ENCODE measurements at regions of chr1 and their contacts with region 1.

Region 1: DNA sequence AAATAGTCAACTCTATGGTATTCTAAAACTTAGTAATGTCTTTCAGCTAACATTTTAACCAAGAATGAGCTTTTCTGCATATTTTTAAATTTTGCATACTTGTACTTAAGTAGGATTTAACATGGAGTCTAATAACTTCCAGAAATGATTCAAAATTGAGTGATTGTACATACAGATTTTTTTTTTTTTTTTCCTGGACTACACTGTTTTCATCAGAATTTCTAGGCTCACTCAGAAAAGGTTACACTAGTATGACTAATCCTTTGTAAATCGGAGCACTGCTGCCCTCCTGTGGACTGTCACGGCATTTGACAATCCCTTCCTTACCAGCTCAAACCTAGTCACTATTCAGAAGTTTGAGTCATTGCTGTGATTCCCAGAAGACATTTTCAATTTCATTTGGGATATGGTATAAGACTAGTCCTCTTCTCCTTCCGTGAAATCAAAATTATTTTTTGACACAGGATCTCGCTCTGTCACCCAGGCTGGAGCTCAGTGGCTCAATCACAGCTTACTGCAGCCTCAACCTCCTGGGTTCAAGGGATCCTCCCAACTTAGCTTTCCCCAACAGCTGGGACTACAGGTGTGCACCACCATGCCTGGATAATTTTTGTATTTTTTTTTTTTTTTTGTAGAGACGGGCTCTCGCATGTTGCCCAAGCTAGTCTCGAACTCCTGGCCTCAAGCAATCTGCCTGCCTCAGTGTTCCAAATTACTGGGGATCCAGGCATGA is 45.5 kb downstream of the CD46 start:
- DNase-seq: peak; percentile 72 to 91 (median 85)
- H3K4me3 ChIP-seq: no peak overlapping the region
- H3K27ac ChIP-seq: no peak overlapping the region
- H3K4me1 ChIP-seq: no peaks in the 10 kb centered on the region
- H3K27me3 ChIP-seq: no peaks in the 10 kb centered on the region
- CTCF ChIP-seq: peak; percentile 56 to 69 (median 64)
- EP300 ChIP-seq: no peak
- POLR2A ChIP-seq: no peak

Region 2: DNA sequence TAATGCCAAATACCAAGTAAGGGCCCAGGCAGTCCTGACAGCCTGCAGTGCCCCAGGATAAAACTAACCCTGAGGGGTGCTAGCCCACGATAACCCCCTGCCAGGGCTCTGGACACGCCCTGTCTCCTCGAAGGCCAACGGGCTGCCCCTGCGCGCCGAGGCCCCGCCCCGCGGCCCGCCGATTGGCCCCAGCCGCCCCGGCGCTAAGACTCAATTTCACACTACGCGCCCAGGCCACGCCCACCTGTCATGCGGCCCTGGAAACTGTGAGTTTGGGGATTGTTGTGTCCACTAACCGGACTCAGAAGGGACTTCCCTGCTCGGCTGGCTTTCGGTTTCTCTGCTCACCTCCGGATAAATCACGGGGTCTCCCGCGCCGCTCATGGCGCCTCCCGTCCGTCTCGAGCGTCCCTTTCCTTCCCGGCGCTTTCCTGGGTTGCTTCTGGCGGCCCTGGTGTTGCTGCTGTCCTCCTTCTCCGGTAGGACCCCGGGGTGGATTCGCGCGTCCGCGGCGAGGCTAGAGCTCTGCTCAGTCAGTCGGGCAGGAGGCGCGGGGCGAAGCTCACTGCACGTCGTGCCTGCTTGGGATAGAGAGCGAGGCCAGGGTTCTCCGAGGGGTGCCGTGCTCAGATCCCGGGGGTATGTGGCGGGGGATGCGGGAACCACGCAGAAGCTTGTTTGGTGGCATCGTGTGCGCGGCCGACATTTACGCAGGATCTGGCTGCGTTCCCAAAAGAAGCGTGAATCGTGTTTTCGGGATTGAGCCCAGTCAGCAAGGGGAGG is 152.4 kb before region 1 on chr1 and contains the start of gene CR1L:
- intact Hi-C with region 1: loop called in 1 of 4 experiments (anchors 10 kb)
- DNase-seq: peak; percentile 50 to 81 (median 69)
- H3K4me3 ChIP-seq: peak within 1 kb of the TSS; percentile 35
- H3K27ac ChIP-seq: no peak within 1 kb of the TSS
- H3K4me1 ChIP-seq: peaks cover 3% of the 10 kb centered on the region
- H3K27me3 ChIP-seq: no peaks in the 10 kb centered on the region
- CTCF ChIP-seq: no peak
- EP300 ChIP-seq: no peak
- POLR2A ChIP-seq: no peak
- total RNA-seq, gene CR1L: 0.92 TPM in 1 of 7 donors, not detected in the others

Region 3: DNA sequence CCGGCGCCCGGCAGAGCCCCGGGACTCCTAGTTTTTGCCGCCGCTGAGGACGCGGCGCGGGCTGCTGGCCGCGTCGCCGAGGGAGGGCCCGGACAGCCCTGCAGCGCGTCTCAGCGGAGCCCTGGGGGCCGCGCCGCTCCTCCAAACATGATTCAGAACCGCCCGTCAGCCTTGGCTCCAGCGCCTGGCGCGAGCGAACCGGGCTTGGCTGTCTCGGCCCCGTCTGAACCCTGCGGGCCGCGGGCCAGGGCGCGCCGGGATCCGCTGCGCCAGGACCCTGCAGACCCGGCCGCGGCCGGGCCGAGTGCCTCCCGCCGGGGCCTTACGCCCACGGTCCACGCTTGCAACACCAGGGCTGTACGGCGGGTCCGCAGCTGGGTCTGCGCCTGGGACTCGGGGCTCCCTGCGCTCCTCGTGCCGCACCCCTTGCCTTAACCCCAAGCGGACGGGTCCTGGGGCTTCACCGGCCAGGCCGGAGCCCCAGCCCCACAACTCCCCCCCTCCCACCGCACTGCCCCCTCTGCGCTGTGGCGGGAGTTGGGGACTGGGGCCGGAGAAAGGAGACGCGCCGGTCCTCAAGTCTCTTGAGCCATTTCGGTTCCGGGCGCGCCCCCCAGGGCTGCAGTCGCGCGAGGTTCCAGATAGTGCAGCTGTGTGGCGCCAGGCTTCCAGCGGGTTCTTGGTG is 161.9 kb after region 1 on chr1:
- intact Hi-C with region 1: no loop called
- DNase-seq: peak; percentile 86 to 93 (median 91)
- H3K4me3 ChIP-seq: peak overlapping the region; percentile 45
- H3K27ac ChIP-seq: peak overlapping the region; percentile 73 to 87
- H3K4me1 ChIP-seq: peaks cover 10% of the 10 kb centered on the region
- H3K27me3 ChIP-seq: no peaks in the 10 kb centered on the region
- CTCF ChIP-seq: no peak
- EP300 ChIP-seq: no peak
- POLR2A ChIP-seq: no peak